A673 (cell line): ENCODE measurements at regions of chr17 and their contacts with region 1.

Region 1: DNA sequence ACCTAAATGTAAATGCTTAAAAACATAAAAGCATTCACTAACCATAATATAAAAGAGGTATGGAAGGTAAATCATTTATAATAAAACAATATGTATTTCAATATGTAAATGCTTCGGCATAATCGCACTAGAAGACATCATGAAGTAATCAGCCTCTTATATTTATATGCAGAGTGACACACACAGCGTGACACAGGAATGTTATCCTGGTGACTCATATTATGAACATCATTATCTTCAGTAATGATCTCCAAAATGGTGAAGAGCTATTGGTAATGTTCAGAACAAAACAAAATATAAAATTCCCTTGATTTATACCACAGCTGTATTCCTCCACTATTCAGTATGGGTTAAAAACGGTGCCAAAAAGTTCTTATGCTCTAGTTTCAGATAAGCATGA is 53.9 kb downstream of the AIPL1 start:
- DNase-seq: peak; percentile 71
- H3K4me3 ChIP-seq: no peak overlapping the region
- H3K27ac ChIP-seq: no peak overlapping the region
- H3K4me1 ChIP-seq: peaks cover 5% of the 10 kb centered on the region
- H3K27me3 ChIP-seq: no peaks in the 10 kb centered on the region
- CTCF ChIP-seq: no peak

Region 2: DNA sequence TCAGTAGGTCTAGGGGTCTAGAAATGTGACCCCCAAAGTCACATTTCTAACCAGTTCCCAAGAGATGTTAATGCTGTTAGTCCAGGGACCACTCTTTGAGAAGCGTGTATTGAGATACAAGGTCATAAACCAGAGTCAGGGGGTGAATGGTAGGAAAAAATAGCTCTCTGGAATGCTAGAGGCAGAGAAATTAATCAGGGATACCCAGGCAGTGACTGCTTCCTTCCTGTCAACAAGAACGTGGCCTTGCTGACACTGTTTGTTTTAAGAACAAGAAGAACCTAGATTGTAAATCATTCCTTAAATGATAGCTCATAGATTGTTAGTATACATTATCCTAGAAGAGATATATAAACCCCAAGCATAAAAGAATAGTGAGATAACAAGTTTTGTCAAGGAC is 131.5 kb after region 1 on chr17:
- CTCF ChIA-PET with region 1: no interaction called
- POLR2A ChIA-PET with region 1: interaction called, 17 read pairs
- intact Hi-C with region 1: no loop called
- DNase-seq: no peak
- H3K4me3 ChIP-seq: no peak overlapping the region
- H3K27ac ChIP-seq: no peak overlapping the region
- H3K4me1 ChIP-seq: peaks cover 4% of the 10 kb centered on the region
- H3K27me3 ChIP-seq: no peaks in the 10 kb centered on the region
- CTCF ChIP-seq: no peak